PC-3 (cell line): ENCODE measurements at regions of chr14 and their contacts with region 1.

Region 1: DNA sequence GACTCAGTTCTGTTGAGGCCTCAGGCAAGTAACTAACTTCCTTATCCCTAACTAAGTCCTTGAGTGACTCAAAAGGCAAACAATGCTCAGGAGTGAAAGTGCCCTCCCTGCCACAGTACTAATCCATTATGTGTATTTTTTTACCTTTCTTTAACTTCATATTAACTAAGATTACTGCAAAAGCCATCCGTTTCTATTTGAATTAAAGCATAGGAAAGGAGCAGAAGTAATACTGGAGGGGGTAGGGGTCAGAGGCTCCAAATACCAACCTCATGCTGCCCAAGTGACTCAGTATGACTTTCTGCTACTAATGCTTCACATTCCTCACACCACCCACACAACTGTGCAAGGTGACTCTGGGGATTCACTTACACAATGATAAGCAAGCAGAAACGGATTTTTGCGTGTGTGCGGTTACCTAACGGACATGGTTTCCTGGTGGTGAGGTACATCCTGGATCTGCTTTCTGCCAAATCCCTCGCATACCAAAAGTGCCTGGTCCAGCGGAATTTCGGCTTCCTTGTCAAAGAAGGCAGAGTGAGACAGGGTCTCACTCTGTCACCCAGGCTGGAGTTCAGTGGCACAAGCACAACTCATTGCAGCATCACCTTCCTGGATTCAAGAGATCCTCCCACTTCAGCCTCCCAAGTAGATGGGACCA is 25.1 kb downstream of the MOK start:
- DNase-seq: peak; percentile 99
- ATAC-seq: peak; percentile 85
- H3K4me3 ChIP-seq: peak overlapping the region; percentile 11; the same call in 1 of the 2 replicates
- H3K27ac ChIP-seq: peak overlapping the region; percentile 99
- H3K4me1 ChIP-seq: peaks cover 74% of the 10 kb centered on the region
- H3K27me3 ChIP-seq: no peaks in the 10 kb centered on the region
- CTCF ChIP-seq: no peak

Region 2: GRCh38 chr14:101559624-101560533 is 719.9 kb before region 1 on chr14:
- CTCF ChIA-PET with region 1: no interaction called
- POLR2A ChIA-PET with region 1: no interaction called
- intact Hi-C with region 1: no loop called
- DNase-seq: peak; percentile 66
- ATAC-seq: peak; percentile 62
- H3K4me3 ChIP-seq: peak overlapping the region; percentile 84
- H3K27ac ChIP-seq: no peak overlapping the region
- H3K4me1 ChIP-seq: no peaks in the 10 kb centered on the region
- H3K27me3 ChIP-seq: peaks cover 32% of the 10 kb centered on the region
- CTCF ChIP-seq: 0 out of 2 replicates have a peak, but pooled peaks have one; percentile 15

Region 3: DNA sequence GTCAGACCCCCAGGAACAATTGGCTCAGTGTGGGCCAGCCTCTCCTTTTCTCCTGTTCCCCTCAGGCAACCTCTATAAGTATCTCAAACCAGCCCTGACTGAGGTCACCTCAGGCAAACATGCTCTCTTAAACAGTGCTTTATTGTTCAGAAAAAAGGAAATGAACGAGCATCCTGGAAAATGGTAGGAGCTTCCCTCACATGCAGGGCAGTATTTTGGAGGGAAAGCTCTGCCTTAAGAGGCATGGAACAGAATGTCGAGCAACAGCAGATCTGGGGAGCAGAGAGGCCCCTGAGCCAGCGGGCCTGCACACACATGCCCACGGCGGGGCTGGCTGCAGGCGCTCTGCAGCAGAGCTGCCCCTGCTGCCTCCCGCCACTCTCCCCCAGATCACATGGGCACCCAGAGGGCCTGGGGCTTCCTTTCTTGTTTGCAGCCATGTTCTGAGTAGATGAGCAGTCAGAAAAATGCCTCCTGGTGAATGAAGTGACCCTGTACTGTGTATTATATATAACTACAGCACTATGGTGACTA is 16.8 kb before region 1 on chr14:
- CTCF ChIA-PET with region 1: no interaction called
- POLR2A ChIA-PET with region 1: interaction called, 5 read pairs
- intact Hi-C with region 1: loop called (anchors 1 kb)
- DNase-seq: peak; percentile 96
- ATAC-seq: peak; percentile 92
- H3K4me3 ChIP-seq: no peak overlapping the region
- H3K27ac ChIP-seq: peak overlapping the region; percentile 99
- H3K4me1 ChIP-seq: peaks cover 33% of the 10 kb centered on the region
- H3K27me3 ChIP-seq: no peaks in the 10 kb centered on the region
- CTCF ChIP-seq: no peak

Region 4: GRCh38 chr14:102304611-102305509 is 25.0 kb after region 1 on chr14 and contains the start of gene MOK:
- CTCF ChIA-PET with region 1: no interaction called
- POLR2A ChIA-PET with region 1: no interaction called
- intact Hi-C with region 1: loop called (anchors 1 kb)
- DNase-seq: peak; percentile 99
- ATAC-seq: peak; percentile 84
- H3K4me3 ChIP-seq: peak within 1 kb of the TSS; percentile 91
- H3K27ac ChIP-seq: peak within 1 kb of the TSS; percentile 80
- H3K4me1 ChIP-seq: peaks cover 33% of the 10 kb centered on the region
- H3K27me3 ChIP-seq: no peaks in the 10 kb centered on the region
- CTCF ChIP-seq: no peak
- total RNA-seq, gene MOK: 106 and 108 TPM in 2 replicates

Region 5: GRCh38 chr14:102717276-102717675 is 437.5 kb after region 1 on chr14:
- CTCF ChIA-PET with region 1: no interaction called
- POLR2A ChIA-PET with region 1: no interaction called
- intact Hi-C with region 1: no loop called
- DNase-seq: no peak
- ATAC-seq: no peak
- H3K4me3 ChIP-seq: no peak overlapping the region
- H3K27ac ChIP-seq: no peak overlapping the region
- H3K4me1 ChIP-seq: no peaks in the 10 kb centered on the region
- H3K27me3 ChIP-seq: no peaks in the 10 kb centered on the region
- CTCF ChIP-seq: no peak

Region 6: GRCh38 chr14:102749393-102750305 is 469.8 kb after region 1 on chr14:
- CTCF ChIA-PET with region 1: no interaction called
- POLR2A ChIA-PET with region 1: no interaction called
- intact Hi-C with region 1: no loop called
- DNase-seq: no peak
- ATAC-seq: no peak
- H3K4me3 ChIP-seq: no peak overlapping the region
- H3K27ac ChIP-seq: no peak overlapping the region
- H3K4me1 ChIP-seq: no peaks in the 10 kb centered on the region
- H3K27me3 ChIP-seq: no peaks in the 10 kb centered on the region
- CTCF ChIP-seq: no peak